Natural killer cell (primary cell): ENCODE measurements at regions of chr17 and their contacts with region 1.

Region 1: GRCh38 chr17:32609085-32609484 is 122.3 kb downstream of the CDK5R1 start:
- DNase-seq: peak; percentile 58 to 86
- ATAC-seq: peak; percentile 96 to 100 (median 100)
- H3K4me3 ChIP-seq: no peak overlapping the region
- H3K4me3 Mint-ChIP-seq: no peak overlapping the region
- H3K27ac ChIP-seq: no peak overlapping the region
- H3K27ac Mint-ChIP-seq: peak overlapping the region in 1 of 2 donors; percentile 56
- H3K4me1 ChIP-seq: peaks cover 3% of the 10 kb centered on the region
- H3K4me1 Mint-ChIP-seq: peaks cover 9% of the 10 kb centered on the region in 2 donors
- H3K27me3 ChIP-seq: no peaks in the 10 kb centered on the region
- H3K27me3 Mint-ChIP-seq: peaks cover 0 to 3% of the 10 kb centered on the region in 2 donors
- CTCF ChIP-seq: peak; percentile 66

Region 2: DNA sequence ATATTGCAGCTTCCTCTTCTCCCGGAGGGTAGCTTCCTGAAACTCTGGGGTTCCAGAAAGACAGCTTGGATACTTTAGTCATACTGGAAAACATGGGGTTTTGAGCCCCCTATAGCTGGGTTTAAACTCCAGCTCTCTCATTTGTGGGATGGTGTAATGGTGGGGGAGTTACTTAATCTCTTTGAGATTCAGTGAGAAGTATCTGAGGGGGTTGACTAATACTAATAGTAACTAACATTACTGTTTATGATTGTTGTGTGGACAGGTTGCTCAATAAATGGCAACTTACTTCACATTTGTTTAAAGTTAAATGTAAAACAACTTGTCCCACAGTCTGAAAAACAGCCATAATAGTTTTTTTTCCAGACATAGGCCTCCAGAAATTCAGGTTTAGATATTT is 677.3 kb before region 1 on chr17:
- intact Hi-C with region 1: no loop called
- DNase-seq: no peak
- ATAC-seq: no peak
- H3K4me3 ChIP-seq: no peak overlapping the region
- H3K4me3 Mint-ChIP-seq: no peak overlapping the region
- H3K27ac ChIP-seq: no peak overlapping the region
- H3K27ac Mint-ChIP-seq: no peak overlapping the region
- H3K4me1 ChIP-seq: peaks cover 5% of the 10 kb centered on the region
- H3K4me1 Mint-ChIP-seq: no peaks in the 10 kb centered on the region
- H3K27me3 ChIP-seq: no peaks in the 10 kb centered on the region
- H3K27me3 Mint-ChIP-seq: peaks cover 0 to 3% of the 10 kb centered on the region in 2 donors
- CTCF ChIP-seq: no peak

Region 3: GRCh38 chr17:32461853-32462617 is 147.1 kb before region 1 on chr17:
- intact Hi-C with region 1: loop called (anchors 1 kb)
- DNase-seq: peak; percentile 52 to 84
- ATAC-seq: peak; percentile 71 to 94 (median 83)
- H3K4me3 ChIP-seq: no peak overlapping the region
- H3K4me3 Mint-ChIP-seq: no peak overlapping the region
- H3K27ac ChIP-seq: no peak overlapping the region
- H3K27ac Mint-ChIP-seq: peak overlapping the region; percentile 13 to 56
- H3K4me1 ChIP-seq: no peaks in the 10 kb centered on the region
- H3K4me1 Mint-ChIP-seq: peaks cover 21 to 22% of the 10 kb centered on the region in 2 donors
- H3K27me3 ChIP-seq: no peaks in the 10 kb centered on the region
- H3K27me3 Mint-ChIP-seq: no peaks in the 10 kb centered on the region
- CTCF ChIP-seq: peak; percentile 77

Region 4: GRCh38 chr17:32551186-32551955 is 57.7 kb before region 1 on chr17:
- intact Hi-C with region 1: loop called (anchors 10 kb)
- DNase-seq: peak in 1 of 2 donors; percentile 43
- ATAC-seq: peak; percentile 60 to 92 (median 88)
- H3K4me3 ChIP-seq: no peak overlapping the region
- H3K4me3 Mint-ChIP-seq: peak overlapping the region; percentile 29
- H3K27ac ChIP-seq: peak overlapping the region; percentile 28
- H3K27ac Mint-ChIP-seq: peak overlapping the region; percentile 86 to 87
- H3K4me1 ChIP-seq: peaks cover 33% of the 10 kb centered on the region
- H3K4me1 Mint-ChIP-seq: peaks cover 47 to 50% of the 10 kb centered on the region in 2 donors
- H3K27me3 ChIP-seq: no peaks in the 10 kb centered on the region
- H3K27me3 Mint-ChIP-seq: no peaks in the 10 kb centered on the region
- CTCF ChIP-seq: no peak